ENCODE measurements at regions of chr4 and their contacts with region 1.

Region 1: DNA sequence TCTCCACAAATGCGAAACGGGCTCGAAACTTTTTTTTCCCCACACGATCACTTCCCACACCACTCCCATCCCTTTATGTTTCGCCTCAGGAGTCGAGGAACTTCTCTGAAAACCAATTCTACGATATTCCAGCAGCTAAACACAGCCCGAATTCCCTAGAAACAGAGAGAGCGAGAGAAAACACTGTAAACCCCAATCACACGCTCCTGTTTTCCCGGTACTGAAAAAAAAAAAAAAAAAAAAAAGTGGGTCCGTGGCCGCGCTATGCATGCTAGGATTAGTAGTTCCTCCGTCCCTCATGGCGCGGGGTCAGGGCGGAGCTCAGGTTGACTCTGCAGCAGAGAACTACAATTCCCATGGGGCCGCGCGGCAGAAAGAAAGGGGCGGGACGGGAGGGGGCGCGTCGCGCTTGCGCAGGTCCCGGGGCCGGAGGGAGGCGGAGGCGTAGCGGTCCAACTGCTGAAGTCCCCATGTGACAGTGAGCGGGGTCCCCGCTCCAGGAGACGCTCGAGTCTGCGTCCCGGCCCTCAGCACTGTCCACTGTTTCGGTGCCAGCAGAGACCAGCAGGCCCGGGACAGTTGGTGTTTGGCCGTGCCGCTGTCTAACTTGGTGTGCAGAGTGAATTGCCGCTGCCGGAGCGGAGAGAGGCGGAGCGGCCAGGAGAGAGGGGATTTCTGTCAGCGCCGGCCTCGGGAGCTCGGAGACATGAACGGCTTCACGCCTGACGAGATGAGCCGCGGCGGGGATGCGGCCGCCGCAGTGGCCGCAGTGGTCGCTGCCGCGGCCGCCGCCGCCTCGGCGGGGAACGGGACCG is at the start of gene SAP30:
- DNase-seq: peak; percentile 90 to 98 (median 94)
- H3K4me3 ChIP-seq: peak within 1 kb of the TSS; percentile 93 to 95
- H3K4me3 Mint-ChIP-seq: peak within 1 kb of the TSS; percentile 98 to 100 (median 99)
- H3K27ac ChIP-seq: peak within 1 kb of the TSS; percentile 68
- H3K27ac Mint-ChIP-seq: peak within 1 kb of the TSS; percentile 81 to 97 (median 96)
- H3K4me1 ChIP-seq: peaks cover 47% of the 10 kb centered on the region
- H3K4me1 Mint-ChIP-seq: peaks cover 14 to 41% (median 29%) of the 10 kb centered on the region in 4 donors
- H3K27me3 ChIP-seq: no peaks in the 10 kb centered on the region
- H3K27me3 Mint-ChIP-seq: no peaks in the 10 kb centered on the region
- total RNA-seq, gene SAP30: 5.6 to 7.0 TPM

Region 2: DNA sequence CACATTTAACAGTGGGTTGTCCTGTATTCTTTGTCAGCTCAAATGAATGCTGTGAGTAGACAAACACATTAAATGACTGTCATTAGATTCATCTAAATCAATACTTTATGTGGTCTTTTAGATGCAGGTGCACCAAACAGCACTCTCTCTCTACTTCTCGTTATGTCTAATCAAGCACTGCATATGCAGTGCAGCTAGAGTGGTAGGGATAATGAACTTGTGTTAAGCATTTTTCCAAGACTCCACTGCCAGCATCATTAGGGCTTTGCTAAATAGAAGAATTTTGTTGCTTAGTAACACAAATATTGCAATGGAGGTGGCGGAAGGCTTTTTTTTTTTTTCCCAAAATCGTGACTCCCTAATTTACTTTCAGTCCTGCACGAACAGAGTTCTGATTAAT is 649.0 kb before region 1 on chr4:
- CTCF ChIA-PET with region 1: no interaction called
- POLR2A ChIA-PET with region 1: no interaction called
- intact Hi-C with region 1: no loop called
- DNase-seq: no peak
- H3K4me3 ChIP-seq: no peak overlapping the region
- H3K4me3 Mint-ChIP-seq: no peak overlapping the region
- H3K27ac ChIP-seq: no peak overlapping the region
- H3K27ac Mint-ChIP-seq: no peak overlapping the region
- H3K4me1 ChIP-seq: no peaks in the 10 kb centered on the region
- H3K4me1 Mint-ChIP-seq: no peaks in the 10 kb centered on the region
- H3K27me3 ChIP-seq: no peaks in the 10 kb centered on the region
- H3K27me3 Mint-ChIP-seq: no peaks in the 10 kb centered on the region

Region 3: DNA sequence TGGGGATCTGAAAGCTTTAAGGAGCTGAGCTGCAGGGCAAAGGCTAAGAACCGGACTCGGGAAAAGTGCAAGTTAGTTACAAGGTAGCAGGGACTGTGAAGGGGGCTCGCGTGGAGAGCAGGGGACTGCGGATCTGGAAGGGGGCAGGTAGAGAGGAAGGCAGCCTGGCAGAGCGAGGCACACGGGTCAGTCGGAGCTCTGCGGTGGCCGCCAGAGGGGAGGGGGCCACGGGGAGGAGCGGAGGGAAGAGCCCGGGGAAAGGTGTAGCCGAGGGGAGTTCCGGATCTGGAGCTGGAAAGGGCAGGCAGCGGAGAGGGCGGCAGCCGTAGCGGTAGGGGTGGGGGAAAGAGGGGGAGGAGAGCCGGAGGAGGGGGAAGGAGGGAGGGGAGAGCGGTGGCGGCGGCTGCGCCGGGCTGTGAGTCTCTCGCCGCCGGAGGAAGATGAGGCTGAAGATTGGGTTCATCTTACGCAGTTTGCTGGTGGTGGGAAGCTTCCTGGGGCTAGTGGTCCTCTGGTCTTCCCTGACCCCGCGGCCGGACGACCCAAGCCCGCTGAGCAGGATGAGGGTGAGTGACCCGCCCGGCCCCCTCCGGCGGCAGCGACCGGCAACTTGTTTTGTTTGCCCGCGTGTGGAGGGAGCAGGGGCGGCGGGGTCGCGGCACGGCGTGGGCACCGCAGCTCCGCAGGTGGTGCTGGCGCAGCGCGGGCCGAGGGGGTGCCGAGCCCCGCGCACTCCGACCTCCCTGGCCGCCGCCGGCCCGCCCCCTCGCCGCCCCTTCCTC is 202.1 kb before region 1 on chr4 and contains the start of gene GALNT7:
- CTCF ChIA-PET with region 1: no interaction called
- POLR2A ChIA-PET with region 1: interaction called, 8 read pairs
- intact Hi-C with region 1: loop called (anchors 1 kb)
- DNase-seq: peak; percentile 52 to 78 (median 54)
- H3K4me3 ChIP-seq: peak within 1 kb of the TSS; percentile 66 to 78
- H3K4me3 Mint-ChIP-seq: peak within 1 kb of the TSS; percentile 95 to 99 (median 98)
- H3K27ac ChIP-seq: peak within 1 kb of the TSS; percentile 58
- H3K27ac Mint-ChIP-seq: peak within 1 kb of the TSS; percentile 63 to 95 (median 89)
- H3K4me1 ChIP-seq: peaks cover 26% of the 10 kb centered on the region
- H3K4me1 Mint-ChIP-seq: peaks cover 32 to 48% (median 40%) of the 10 kb centered on the region in 4 donors
- H3K27me3 ChIP-seq: no peaks in the 10 kb centered on the region
- H3K27me3 Mint-ChIP-seq: no peaks in the 10 kb centered on the region
- total RNA-seq, gene GALNT7: 24.1 to 26.3 TPM

Region 4: GRCh38 chr4:173318648-173319211 is 52.0 kb before region 1 on chr4:
- CTCF ChIA-PET with region 1: interaction called, 26 read pairs
- POLR2A ChIA-PET with region 1: interaction called, 4 read pairs
- intact Hi-C with region 1: no loop called
- DNase-seq: peak in 4 of 5 donors; percentile 28 to 37 (median 31)
- H3K4me3 ChIP-seq: no peak overlapping the region
- H3K4me3 Mint-ChIP-seq: no peak overlapping the region
- H3K27ac ChIP-seq: no peak overlapping the region
- H3K27ac Mint-ChIP-seq: no peak overlapping the region
- H3K4me1 ChIP-seq: no peaks in the 10 kb centered on the region
- H3K4me1 Mint-ChIP-seq: peaks cover 0 to 2% (median under 1%) of the 10 kb centered on the region in 4 donors
- H3K27me3 ChIP-seq: no peaks in the 10 kb centered on the region
- H3K27me3 Mint-ChIP-seq: no peaks in the 10 kb centered on the region

Region 5: GRCh38 chr4:173494013-173494970 is 123.6 kb after region 1 on chr4:
- CTCF ChIA-PET with region 1: interaction called, 3 read pairs
- POLR2A ChIA-PET with region 1: interaction called, 7 read pairs
- intact Hi-C with region 1: loop called (anchors 2 kb)
- DNase-seq: peak; percentile 60 to 71 (median 66)
- H3K4me3 ChIP-seq: peak overlapping the region; percentile 46 to 54
- H3K4me3 Mint-ChIP-seq: peak overlapping the region; percentile 85 to 94 (median 88)
- H3K27ac ChIP-seq: no peak overlapping the region
- H3K27ac Mint-ChIP-seq: peak overlapping the region in 3 of 7 donors; percentile 19 to 66 (median 32)
- H3K4me1 ChIP-seq: peaks cover 11% of the 10 kb centered on the region
- H3K4me1 Mint-ChIP-seq: peaks cover 11 to 28% (median 18%) of the 10 kb centered on the region in 4 donors
- H3K27me3 ChIP-seq: no peaks in the 10 kb centered on the region
- H3K27me3 Mint-ChIP-seq: peaks cover 15 to 19% of the 10 kb centered on the region in 2 donors

Region 6: DNA sequence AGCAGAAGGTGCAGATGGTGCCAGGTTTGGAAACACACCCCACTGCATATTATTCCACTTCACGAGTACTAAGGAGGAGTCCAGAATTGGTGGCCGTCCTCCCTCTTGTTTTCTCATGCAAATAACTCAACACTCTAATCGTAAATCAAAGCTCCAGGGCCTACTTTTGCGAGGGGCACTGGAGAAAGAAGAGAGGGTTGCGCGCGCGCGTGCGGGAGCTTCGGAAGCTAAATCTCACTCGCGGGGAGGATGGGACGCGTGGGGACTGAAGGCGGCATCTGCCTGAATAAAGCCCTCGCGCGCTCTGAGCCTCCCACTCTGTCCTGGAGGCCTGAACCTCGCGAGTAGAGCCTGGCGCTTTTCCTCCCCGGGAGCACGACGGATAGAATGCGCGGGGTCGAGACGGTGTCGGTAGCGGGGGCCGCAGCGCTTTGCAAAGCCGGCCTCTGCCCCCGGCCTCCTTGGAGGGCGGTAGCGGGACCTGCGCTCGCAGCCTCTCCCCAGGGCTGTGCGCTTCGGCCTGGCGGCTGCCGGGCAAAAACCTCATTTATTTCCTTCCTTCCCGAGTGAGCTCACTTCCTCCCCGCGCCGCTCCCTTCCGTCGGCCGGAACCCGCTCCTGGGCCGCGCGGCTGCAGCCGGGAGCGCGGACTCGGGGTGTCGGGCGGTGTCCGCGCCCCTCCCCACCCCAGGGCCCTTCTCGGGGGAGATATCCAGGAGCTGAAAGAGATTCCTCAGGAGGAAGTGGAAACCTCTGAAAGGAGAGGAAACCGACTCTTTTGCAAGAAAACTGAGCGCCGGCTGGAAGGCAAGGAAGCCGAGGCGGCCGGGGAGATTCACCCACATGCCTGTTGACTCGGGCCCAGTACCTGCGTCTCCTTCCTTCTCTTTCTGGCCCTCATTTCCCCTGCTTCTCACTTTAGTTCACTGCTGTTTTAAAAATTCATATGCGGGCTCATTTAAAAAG is 138.6 kb after region 1 on chr4:
- CTCF ChIA-PET with region 1: no interaction called
- POLR2A ChIA-PET with region 1: no interaction called
- intact Hi-C with region 1: no loop called
- DNase-seq: no peak
- H3K4me3 ChIP-seq: peak overlapping the region; percentile 23 to 46
- H3K4me3 Mint-ChIP-seq: peak overlapping the region; percentile 38 to 88 (median 84)
- H3K27ac ChIP-seq: no peak overlapping the region
- H3K27ac Mint-ChIP-seq: no peak overlapping the region
- H3K4me1 ChIP-seq: peaks cover 26% of the 10 kb centered on the region
- H3K4me1 Mint-ChIP-seq: peaks cover 4 to 27% (median 19%) of the 10 kb centered on the region in 4 donors
- H3K27me3 ChIP-seq: peaks cover 54% of the 10 kb centered on the region
- H3K27me3 Mint-ChIP-seq: peaks cover 60 to 74% of the 10 kb centered on the region in 2 donors

Region 7: DNA sequence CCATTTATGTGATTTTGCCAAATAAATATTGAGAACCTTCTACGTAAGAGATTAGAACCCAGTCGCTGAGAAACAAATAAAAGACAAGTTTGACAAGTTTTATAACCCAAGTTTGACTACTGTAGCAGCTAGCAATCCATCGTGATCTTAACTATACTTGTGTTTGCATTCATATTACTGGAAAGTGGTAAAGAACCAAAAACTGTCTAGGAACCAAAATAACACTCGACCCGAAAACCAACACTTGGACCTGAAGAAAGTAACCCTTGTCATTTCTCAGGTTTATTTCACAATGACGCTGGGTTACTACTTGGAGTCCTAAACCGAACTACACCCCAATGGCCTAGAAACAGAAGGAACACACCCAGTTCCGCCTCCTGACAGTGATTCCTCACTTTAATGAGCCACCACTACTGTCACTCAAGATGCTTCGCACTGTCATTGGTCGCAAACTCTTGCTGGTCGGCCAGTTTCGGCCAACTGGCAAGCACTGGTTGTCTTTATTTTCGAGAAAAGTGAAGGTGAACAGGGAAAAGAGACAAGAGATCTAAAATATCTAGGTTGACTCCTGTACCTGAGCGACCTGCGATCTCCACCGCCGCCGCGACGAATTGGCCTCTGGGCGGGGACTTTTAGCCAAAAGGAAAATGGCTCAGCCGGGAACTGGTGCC is 912.3 kb after region 1 on chr4:
- CTCF ChIA-PET with region 1: no interaction called
- POLR2A ChIA-PET with region 1: interaction called, 10 read pairs
- intact Hi-C with region 1: loop called (anchors 1 kb)
- DNase-seq: peak; percentile 84 to 92 (median 86)
- H3K4me3 ChIP-seq: peak overlapping the region; percentile 71 to 92
- H3K4me3 Mint-ChIP-seq: peak overlapping the region; percentile 96 to 100 (median 99)
- H3K27ac ChIP-seq: peak overlapping the region; percentile 97
- H3K27ac Mint-ChIP-seq: peak overlapping the region; percentile 98 to 100 (median 100)
- H3K4me1 ChIP-seq: peaks cover 59% of the 10 kb centered on the region
- H3K4me1 Mint-ChIP-seq: peaks cover 44 to 80% (median 61%) of the 10 kb centered on the region in 4 donors
- H3K27me3 ChIP-seq: no peaks in the 10 kb centered on the region
- H3K27me3 Mint-ChIP-seq: no peaks in the 10 kb centered on the region